Brain microvascular endothelial cell (primary cell): ENCODE measurements at regions of chr3 and their contacts with region 1.

Region 1: DNA sequence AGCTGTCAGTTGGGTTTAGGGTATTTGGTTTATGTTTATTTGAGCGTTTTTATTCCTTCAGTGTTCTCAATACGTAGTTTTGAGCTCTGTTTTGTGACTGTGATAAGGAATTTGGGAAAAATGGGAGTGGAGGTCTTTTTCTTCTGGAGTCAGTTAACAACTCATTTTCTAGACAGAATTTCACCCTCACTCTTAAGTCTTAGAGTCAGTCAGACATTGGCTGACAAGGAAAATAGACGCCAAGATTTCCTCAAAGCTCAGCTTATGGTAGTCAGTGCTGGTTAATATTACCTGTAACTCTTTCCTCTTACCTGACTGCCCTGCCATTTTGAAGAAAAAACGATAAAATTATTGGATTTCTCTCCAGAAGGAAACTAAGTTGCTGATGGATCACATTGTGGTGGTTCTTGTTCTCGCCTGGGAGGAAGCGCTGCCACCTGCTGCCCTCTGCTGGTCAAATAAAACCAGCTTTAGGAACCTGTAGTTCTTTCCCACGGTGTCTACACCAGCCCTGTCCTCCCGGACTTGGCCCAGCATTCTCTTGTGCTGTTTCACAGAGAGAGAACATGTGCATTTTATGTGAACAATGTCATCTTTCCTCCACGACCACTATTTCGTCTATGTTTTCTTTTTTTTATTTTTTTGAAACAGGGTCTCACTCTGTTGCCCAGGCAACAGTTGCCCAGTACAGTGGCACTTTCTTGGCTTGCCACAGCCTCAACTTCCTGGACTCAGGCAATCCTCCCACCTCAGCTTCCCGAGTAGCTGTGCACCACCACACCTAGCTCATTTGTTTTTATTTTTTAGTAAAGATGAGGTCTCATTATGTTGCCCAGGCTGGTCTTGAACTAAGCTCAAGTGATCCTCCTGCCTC is 41.4 kb upstream of the UMPS start:
- DNase-seq: peak; percentile 79
- H3K4me3 ChIP-seq: no peak overlapping the region
- H3K27ac ChIP-seq: no peak overlapping the region
- H3K27me3 ChIP-seq: no peaks in the 10 kb centered on the region
- CTCF ChIP-seq: peak; percentile 89

Region 2: GRCh38 chr3:124559881-124560574 is 128.8 kb before region 1 on chr3:
- in situ Hi-C with region 1: loop called (anchors 25 kb)
- DNase-seq: peak; percentile 84
- H3K4me3 ChIP-seq: no peak overlapping the region
- H3K27ac ChIP-seq: no peak overlapping the region
- H3K27me3 ChIP-seq: no peaks in the 10 kb centered on the region
- CTCF ChIP-seq: peak; percentile 92